ENCODE measurements at regions of chr5 and their contacts with region 1.

Region 1: DNA sequence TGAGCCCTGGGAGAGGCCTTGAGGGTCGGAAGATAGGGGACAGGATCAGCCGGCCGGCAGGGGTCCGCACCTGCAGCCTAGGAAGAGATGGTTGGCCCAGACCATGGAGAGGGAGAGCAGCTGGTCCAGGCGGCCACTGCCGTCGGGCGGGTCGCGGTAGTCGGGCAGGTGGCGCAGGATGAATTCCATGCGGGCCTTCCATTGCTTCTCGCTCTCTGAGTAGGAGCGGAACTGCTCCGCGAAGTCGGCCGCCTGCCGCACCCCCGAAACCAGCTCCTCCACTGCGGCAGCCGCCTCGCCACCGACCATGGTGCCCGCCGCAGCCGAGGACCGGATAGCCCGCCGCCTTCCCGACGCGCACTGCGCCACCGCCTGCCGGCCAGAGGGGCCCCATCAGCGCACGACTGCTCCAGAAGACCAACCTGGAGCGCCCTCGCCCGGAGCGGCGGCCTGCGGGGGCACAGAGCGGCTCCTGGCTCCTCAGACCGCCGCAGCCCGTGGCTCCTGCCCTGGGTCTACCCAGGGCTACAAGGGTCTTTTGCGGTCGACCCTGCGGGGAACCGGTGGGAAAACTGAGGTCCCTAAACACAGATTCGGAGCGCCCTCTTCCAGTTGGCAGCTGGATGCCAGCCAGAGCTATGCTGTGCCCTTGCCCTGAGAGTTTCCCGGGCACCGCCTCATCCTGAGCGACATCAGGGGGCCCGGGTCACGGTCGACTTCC is at the start of gene CDKN2AIPNL:
- DNase-seq: peak; percentile 84 to 94 (median 90)
- ATAC-seq: peak; percentile 99
- H3K4me3 ChIP-seq: peak within 1 kb of the TSS; percentile 81
- H3K4me3 Mint-ChIP-seq: peak within 1 kb of the TSS; percentile 87
- H3K27ac ChIP-seq: peak within 1 kb of the TSS; percentile 53 to 64
- H3K27ac Mint-ChIP-seq: peak within 1 kb of the TSS; percentile 81
- H3K4me1 ChIP-seq: peaks cover 25% of the 10 kb centered on the region
- H3K4me1 Mint-ChIP-seq: peaks cover 42% of the 10 kb centered on the region
- H3K27me3 ChIP-seq: no peaks in the 10 kb centered on the region
- H3K27me3 Mint-ChIP-seq: no peaks in the 10 kb centered on the region
- CTCF ChIP-seq: peak; percentile 79
- total RNA-seq, gene CDKN2AIPNL: 12.8 to 15.5 TPM

Region 2: GRCh38 chr5:133868946-133869518 is 542.7 kb before region 1 on chr5:
- CTCF ChIA-PET with region 1: no interaction called
- POLR2A ChIA-PET with region 1: no interaction called
- intact Hi-C with region 1: no loop called
- DNase-seq: peak; percentile 44 to 83 (median 62)
- ATAC-seq: peak; percentile 78
- H3K4me3 ChIP-seq: no peak overlapping the region
- H3K4me3 Mint-ChIP-seq: no peak overlapping the region
- H3K27ac ChIP-seq: no peak overlapping the region
- H3K27ac Mint-ChIP-seq: no peak overlapping the region
- H3K4me1 ChIP-seq: no peaks in the 10 kb centered on the region
- H3K4me1 Mint-ChIP-seq: peaks cover 5% of the 10 kb centered on the region
- H3K27me3 ChIP-seq: peaks cover 0 to 7% of the 10 kb centered on the region in 2 experiments
- H3K27me3 Mint-ChIP-seq: peaks cover 27% of the 10 kb centered on the region
- CTCF ChIP-seq: peak; percentile 78

Region 3: GRCh38 chr5:134304311-134304710 is 107.4 kb before region 1 on chr5:
- CTCF ChIA-PET with region 1: interaction called, 6 read pairs
- POLR2A ChIA-PET with region 1: interaction called, 3 read pairs
- intact Hi-C with region 1: loop called in 1 of 2 experiments (anchors 10 kb)
- DNase-seq: no peak
- ATAC-seq: no peak
- H3K4me3 ChIP-seq: no peak overlapping the region
- H3K4me3 Mint-ChIP-seq: no peak overlapping the region
- H3K27ac ChIP-seq: no peak overlapping the region
- H3K27ac Mint-ChIP-seq: no peak overlapping the region
- H3K4me1 ChIP-seq: peaks cover 3% of the 10 kb centered on the region
- H3K4me1 Mint-ChIP-seq: no peaks in the 10 kb centered on the region
- H3K27me3 ChIP-seq: no peaks in the 10 kb centered on the region
- H3K27me3 Mint-ChIP-seq: no peaks in the 10 kb centered on the region
- CTCF ChIP-seq: no peak

Region 4: DNA sequence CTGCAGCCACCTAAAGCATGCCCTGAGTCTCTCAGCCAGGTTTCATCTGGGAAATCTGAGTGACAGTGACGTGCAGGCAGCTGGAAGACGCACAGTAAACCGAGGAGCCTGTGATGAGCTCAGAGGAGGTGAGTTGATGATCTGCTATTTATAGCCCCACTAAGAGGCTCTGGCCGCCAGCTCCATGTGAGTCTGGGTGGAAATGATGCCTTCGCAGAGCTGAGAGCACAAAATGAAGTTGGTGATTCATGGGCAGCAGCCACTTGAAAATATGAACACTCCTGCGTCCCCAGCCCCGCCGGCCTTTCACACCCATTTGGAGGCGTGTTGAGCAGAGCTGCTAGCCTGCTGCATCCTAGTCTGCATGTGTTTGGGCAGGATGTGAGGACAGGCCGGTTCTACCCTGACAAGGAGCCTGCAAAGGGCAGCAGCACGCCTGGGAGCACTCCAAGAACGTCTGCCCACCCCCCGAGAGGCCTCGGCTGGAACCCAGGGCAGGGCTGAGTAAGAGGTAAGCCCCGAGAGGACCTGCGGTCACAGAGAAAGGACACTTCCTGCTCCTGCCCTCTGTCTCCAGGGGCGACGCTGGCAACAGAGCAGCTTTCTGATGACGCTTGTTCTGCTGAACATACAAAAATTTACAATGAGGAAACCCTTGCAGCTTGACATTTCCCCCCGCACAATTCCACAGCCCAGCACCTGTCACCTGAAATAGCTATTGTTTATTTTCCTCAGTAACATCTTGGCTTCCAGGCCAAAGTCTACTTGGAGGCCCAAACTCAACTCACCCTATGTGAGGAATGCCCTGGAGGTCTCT is 25.0 kb after region 1 on chr5:
- CTCF ChIA-PET with region 1: interaction called, 7 read pairs
- POLR2A ChIA-PET with region 1: interaction called, 10 read pairs
- intact Hi-C with region 1: no loop called
- DNase-seq: peak; percentile 18 to 81 (median 46)
- ATAC-seq: peak; percentile 78
- H3K4me3 ChIP-seq: peak overlapping the region; percentile 19
- H3K4me3 Mint-ChIP-seq: peak overlapping the region; percentile 74
- H3K27ac ChIP-seq: peak overlapping the region in 1 of 2 donors; percentile 6
- H3K27ac Mint-ChIP-seq: peak overlapping the region; percentile 85
- H3K4me1 ChIP-seq: peaks cover 16% of the 10 kb centered on the region
- H3K4me1 Mint-ChIP-seq: peaks cover 18% of the 10 kb centered on the region
- H3K27me3 ChIP-seq: no peaks in the 10 kb centered on the region
- H3K27me3 Mint-ChIP-seq: no peaks in the 10 kb centered on the region
- CTCF ChIP-seq: no peak

Region 5: DNA sequence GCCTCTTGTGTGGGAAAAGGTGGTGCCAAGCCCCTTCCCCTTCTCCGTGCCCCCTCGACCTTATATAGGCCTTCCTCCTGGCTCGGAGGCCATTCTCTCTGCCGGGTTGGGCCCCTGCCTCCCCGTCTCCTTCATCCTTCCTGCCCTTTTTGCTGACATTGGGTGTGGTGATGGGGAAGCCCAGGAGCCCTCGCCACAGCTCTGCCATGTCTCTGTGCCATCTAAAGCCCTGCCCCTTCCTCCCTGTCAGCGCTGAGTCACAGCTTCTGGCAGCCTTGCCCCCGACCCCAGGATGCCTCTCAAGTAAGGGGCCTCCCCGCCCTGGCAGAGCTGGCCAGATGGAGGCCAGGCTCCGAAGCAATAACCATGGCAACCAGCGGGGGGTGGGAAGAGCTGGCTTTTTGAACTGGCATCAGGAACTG is 144.2 kb after region 1 on chr5:
- CTCF ChIA-PET with region 1: interaction called, 11 read pairs
- POLR2A ChIA-PET with region 1: interaction called, 7 read pairs
- intact Hi-C with region 1: no loop called
- DNase-seq: peak; percentile 51 to 95 (median 75)
- ATAC-seq: peak; percentile 91
- H3K4me3 ChIP-seq: no peak overlapping the region
- H3K4me3 Mint-ChIP-seq: peak overlapping the region; percentile 80
- H3K27ac ChIP-seq: peak overlapping the region; percentile 77 to 92
- H3K27ac Mint-ChIP-seq: peak overlapping the region; percentile 95
- H3K4me1 ChIP-seq: peaks cover 50% of the 10 kb centered on the region
- H3K4me1 Mint-ChIP-seq: peaks cover 45% of the 10 kb centered on the region
- H3K27me3 ChIP-seq: no peaks in the 10 kb centered on the region
- H3K27me3 Mint-ChIP-seq: no peaks in the 10 kb centered on the region
- CTCF ChIP-seq: no peak

Region 6: DNA sequence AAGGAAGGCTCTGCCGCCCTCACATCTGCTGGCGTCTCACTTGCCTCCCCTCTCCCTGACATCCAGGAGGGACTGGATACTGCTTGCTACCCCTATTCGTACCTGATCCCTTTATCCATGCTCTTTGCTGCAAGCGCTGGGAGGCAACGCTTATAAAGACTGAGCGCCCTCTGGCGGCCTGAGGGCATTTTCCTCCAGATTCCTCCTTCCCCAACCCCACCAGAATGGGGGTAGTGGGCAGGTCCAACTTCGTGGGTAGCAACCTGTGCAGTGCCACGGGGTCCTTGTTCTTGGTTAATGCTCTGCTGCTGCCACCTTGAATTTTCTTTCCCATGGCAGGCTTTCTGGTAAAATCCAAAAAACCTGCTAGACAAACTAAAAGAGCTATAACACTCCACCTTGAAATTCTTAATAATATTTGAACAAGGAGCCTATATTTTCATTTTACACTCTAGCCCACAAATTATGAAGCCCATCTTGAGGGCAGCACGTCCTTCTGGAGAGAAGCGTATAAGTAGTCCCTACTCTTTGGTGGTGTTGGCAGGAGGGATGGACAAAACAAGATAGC is 166.2 kb after region 1 on chr5:
- CTCF ChIA-PET with region 1: interaction called, 5 read pairs
- POLR2A ChIA-PET with region 1: interaction called, 4 read pairs
- intact Hi-C with region 1: loop called (anchors 1 kb)
- DNase-seq: peak; percentile 63 to 86 (median 72)
- ATAC-seq: peak; percentile 85
- H3K4me3 ChIP-seq: no peak overlapping the region
- H3K4me3 Mint-ChIP-seq: no peak overlapping the region
- H3K27ac ChIP-seq: no peak overlapping the region
- H3K27ac Mint-ChIP-seq: peak overlapping the region; percentile 82
- H3K4me1 ChIP-seq: peaks cover 9% of the 10 kb centered on the region
- H3K4me1 Mint-ChIP-seq: peaks cover 7% of the 10 kb centered on the region
- H3K27me3 ChIP-seq: no peaks in the 10 kb centered on the region
- H3K27me3 Mint-ChIP-seq: no peaks in the 10 kb centered on the region
- CTCF ChIP-seq: peak; percentile 91

Region 7: DNA sequence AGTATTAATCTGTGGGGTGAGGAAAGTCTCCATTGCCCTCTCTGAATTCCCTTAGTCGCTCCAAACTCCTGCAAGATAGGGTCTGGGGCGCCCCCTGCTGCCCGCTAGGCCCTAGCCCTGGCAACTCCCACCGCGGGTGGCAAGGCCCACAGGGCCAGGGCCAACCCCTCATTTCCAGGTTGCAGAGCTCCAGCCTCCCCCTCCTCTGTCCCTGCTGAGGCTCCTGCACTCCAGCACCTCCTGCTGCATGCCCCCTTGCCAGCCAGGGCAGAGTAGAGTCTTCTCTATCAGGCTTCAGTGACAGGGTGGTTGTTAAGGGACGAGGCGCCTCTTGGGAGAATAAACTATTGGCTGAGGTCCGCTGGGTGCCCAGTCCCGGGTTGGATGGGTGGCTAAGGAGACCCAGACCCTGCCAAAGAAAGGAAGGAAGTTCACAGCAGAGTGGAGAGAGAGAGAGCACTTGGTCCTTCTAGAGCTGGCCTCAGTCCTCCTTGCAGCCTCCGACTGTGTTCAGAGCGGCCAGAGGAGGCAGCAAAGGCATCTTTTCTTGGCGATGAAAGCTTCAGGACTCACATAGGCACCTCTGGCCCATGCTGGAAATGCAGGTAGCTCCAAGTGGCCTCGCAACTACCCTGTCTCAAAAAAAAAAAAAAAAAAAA is 175.3 kb after region 1 on chr5:
- CTCF ChIA-PET with region 1: interaction called, 23 read pairs
- POLR2A ChIA-PET with region 1: interaction called, 3 read pairs
- intact Hi-C with region 1: no loop called
- DNase-seq: peak; percentile 72 to 88 (median 79)
- ATAC-seq: peak; percentile 97
- H3K4me3 ChIP-seq: no peak overlapping the region
- H3K4me3 Mint-ChIP-seq: peak overlapping the region; percentile 3
- H3K27ac ChIP-seq: no peak overlapping the region
- H3K27ac Mint-ChIP-seq: peak overlapping the region; percentile 28
- H3K4me1 ChIP-seq: peaks cover 7% of the 10 kb centered on the region
- H3K4me1 Mint-ChIP-seq: peaks cover 16% of the 10 kb centered on the region
- H3K27me3 ChIP-seq: no peaks in the 10 kb centered on the region
- H3K27me3 Mint-ChIP-seq: no peaks in the 10 kb centered on the region
- CTCF ChIP-seq: peak; percentile 84

Region 8: DNA sequence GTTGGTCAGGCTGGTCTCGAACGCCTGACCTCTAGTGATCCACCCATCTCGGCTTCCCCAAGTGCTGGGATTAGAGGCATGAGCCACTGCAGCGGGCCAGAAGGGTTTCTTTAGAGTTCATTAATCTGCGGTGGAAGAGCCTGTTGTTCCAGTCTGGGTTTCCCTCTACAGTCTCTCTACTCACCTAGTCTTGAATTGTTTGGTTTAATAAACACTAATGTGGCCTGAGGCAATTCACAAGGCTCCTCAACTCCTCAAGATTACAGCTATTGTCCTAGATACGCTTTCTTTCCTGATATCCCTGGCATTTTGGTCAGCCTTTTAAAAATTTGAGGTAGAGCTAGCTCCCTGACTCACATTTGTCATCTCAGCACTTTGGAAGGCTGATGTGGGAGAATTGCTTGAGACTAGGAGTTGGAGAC is 225.5 kb after region 1 on chr5:
- CTCF ChIA-PET with region 1: no interaction called
- POLR2A ChIA-PET with region 1: no interaction called
- intact Hi-C with region 1: loop called in 1 of 2 experiments (anchors 5 kb)
- DNase-seq: no peak
- ATAC-seq: no peak
- H3K4me3 ChIP-seq: no peak overlapping the region
- H3K4me3 Mint-ChIP-seq: no peak overlapping the region
- H3K27ac ChIP-seq: no peak overlapping the region
- H3K27ac Mint-ChIP-seq: no peak overlapping the region
- H3K4me1 ChIP-seq: peaks cover 8% of the 10 kb centered on the region
- H3K4me1 Mint-ChIP-seq: peaks cover 12% of the 10 kb centered on the region
- H3K27me3 ChIP-seq: no peaks in the 10 kb centered on the region
- H3K27me3 Mint-ChIP-seq: no peaks in the 10 kb centered on the region
- CTCF ChIP-seq: no peak

Region 9: DNA sequence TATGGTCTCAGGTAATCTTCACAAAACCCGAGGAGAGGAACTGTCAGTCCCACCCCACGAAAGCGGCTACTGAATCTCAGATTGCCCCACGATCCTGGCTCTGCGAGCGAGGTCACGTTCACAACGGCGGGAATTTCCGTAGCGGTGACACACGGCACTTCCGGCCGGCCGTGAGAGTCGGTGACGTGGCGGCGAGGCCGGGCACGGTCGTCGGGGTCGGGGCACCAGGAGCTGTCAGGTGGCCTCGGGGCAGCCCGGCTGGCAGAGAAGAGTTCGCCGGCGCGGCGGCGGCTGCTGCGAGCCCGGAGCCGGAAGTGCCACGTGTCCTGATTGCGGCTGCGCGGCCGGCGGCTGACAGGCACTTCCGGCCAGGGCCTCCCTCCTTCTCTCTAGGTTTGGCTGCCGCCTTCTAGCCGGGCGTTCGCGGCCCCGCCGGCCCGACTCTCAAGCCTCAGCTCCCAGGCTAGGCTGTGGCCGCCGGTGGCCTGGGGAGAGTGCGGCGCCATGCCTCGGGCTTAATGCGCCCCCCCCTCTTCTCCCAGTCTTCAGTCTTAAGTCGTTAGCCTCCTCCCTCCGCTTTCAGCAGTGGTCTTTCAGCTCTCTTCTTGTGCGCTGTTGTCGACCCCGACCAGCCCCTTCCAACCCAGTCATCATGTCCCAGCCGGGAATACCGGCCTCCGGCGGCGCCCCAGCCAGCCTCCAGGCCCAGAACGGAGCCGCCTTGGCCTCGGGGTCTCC is 236.9 kb after region 1 on chr5 and contains the start of gene SEC24A:
- CTCF ChIA-PET with region 1: no interaction called
- POLR2A ChIA-PET with region 1: no interaction called
- intact Hi-C with region 1: no loop called
- DNase-seq: peak; percentile 74 to 98 (median 82)
- ATAC-seq: peak; percentile 78
- H3K4me3 ChIP-seq: peak within 1 kb of the TSS; percentile 80
- H3K4me3 Mint-ChIP-seq: peak within 1 kb of the TSS; percentile 99
- H3K27ac ChIP-seq: peak within 1 kb of the TSS; percentile 93 to 98
- H3K27ac Mint-ChIP-seq: peak within 1 kb of the TSS; percentile 95
- H3K4me1 ChIP-seq: peaks cover 27% of the 10 kb centered on the region
- H3K4me1 Mint-ChIP-seq: peaks cover 31% of the 10 kb centered on the region
- H3K27me3 ChIP-seq: no peaks in the 10 kb centered on the region
- H3K27me3 Mint-ChIP-seq: no peaks in the 10 kb centered on the region
- CTCF ChIP-seq: no peak
- total RNA-seq, gene SEC24A: 11.7 to 12.3 TPM

Measured in CD4-positive, alpha-beta T cell (primary cell).